KBM-7 (cell line): ENCODE measurements at regions of chr1 and their contacts with region 1.

Region 1: DNA sequence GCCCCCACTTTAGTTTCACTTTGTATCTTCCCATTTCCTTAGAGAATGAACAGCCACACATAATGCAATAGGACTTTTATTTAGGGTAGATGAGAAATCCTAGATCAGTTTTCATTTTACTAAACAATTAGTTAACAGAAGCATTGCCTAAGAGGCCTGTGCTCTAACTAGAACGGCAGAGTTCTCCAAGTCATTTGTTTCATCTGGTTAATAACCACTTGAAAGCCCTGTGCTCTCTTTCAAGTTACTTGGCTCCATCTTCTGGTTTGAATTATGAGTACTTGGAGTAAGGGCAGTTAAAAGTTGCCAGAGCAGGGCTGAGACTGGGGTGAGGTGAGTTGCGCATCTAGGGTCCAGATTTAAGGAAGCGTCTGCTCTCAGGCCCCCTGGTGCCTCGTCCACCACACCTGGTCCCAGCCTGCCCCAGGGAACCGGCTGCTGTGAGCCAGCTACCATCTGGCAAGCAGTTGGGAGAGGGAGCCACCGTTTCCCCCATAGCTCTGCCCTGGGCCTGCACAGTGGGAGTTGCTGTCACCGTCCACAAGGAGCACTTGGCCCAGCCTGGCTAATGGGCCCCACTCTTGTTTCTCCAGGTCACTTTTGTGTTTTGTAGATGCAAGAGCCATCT is 18.1 kb upstream of the SLC44A3 start:
- DNase-seq: peak; percentile 84

Region 2: GRCh38 chr1:94522304-94522703 is 279.7 kb before region 1 on chr1:
- in situ Hi-C with region 1: loop called (anchors 10 kb)
- DNase-seq: peak; percentile 61